ENCODE measurements at regions of chr4 and their contacts with region 1.

Region 1: GRCh38 chr4:39365830-39366771 is at the start of gene RFC1:
- DNase-seq: peak; percentile 88 to 97 (median 92)
- ATAC-seq: peak; percentile 96 to 98
- H3K4me3 Mint-ChIP-seq: peak within 1 kb of the TSS; percentile 91 to 94 (median 93)
- H3K27ac Mint-ChIP-seq: peak within 1 kb of the TSS; percentile 85 to 96 (median 94)
- H3K4me1 Mint-ChIP-seq: peaks cover 13 to 46% (median 40%) of the 10 kb centered on the region in 4 donors
- H3K27me3 Mint-ChIP-seq: no peaks in the 10 kb centered on the region
- polyA plus RNA-seq, gene RFC1: 26.6 to 43.2 (median 32.6) TPM

Region 2: GRCh38 chr4:38948551-38948950 is 417.6 kb before region 1 on chr4:
- POLR2A ChIA-PET with region 1: no interaction called
- DNase-seq: no peak
- ATAC-seq: no peak
- H3K4me3 Mint-ChIP-seq: no peak overlapping the region
- H3K27ac Mint-ChIP-seq: peak overlapping the region in 6 of 10 donors; percentile 87 to 97 (median 94)
- H3K4me1 Mint-ChIP-seq: peaks cover 8 to 21% (median 14%) of the 10 kb centered on the region in 4 donors
- H3K27me3 Mint-ChIP-seq: peaks cover 0 to 2% (median 0%) of the 10 kb centered on the region in 5 donors

Region 3: GRCh38 chr4:39353478-39354253 is 12.4 kb before region 1 on chr4:
- POLR2A ChIA-PET with region 1: interaction called, 38 read pairs
- DNase-seq: peak in 4 of 10 donors; percentile 7 to 64 (median 60)
- ATAC-seq: peak; percentile 77 to 85
- H3K4me3 Mint-ChIP-seq: peak overlapping the region; percentile 70 to 93 (median 86)
- H3K27ac Mint-ChIP-seq: peak overlapping the region; percentile 87 to 97 (median 94)
- H3K4me1 Mint-ChIP-seq: peaks cover 21 to 74% (median 55%) of the 10 kb centered on the region in 4 donors
- H3K27me3 Mint-ChIP-seq: no peaks in the 10 kb centered on the region

Region 4: GRCh38 chr4:39514888-39515401 is 148.8 kb after region 1 on chr4:
- POLR2A ChIA-PET with region 1: no interaction called
- DNase-seq: no peak
- ATAC-seq: no peak
- H3K4me3 Mint-ChIP-seq: no peak overlapping the region
- H3K27ac Mint-ChIP-seq: peak overlapping the region in 1 of 10 donors; percentile 25
- H3K4me1 Mint-ChIP-seq: peaks cover 0 to 2% (median 0%) of the 10 kb centered on the region in 4 donors
- H3K27me3 Mint-ChIP-seq: no peaks in the 10 kb centered on the region

Measured in naive thymus-derived CD8-positive, alpha-beta T cell (primary cell).